ENCODE measurements at regions of chr17 and their contacts with region 1.

Region 1: GRCh38 chr17:81959362-81960129 is 1.4 kb downstream of the NOTUM start:
- DNase-seq: peak; percentile 76
- ATAC-seq: peak; percentile 86
- H3K4me3 Mint-ChIP-seq: peak overlapping the region; percentile 42
- H3K27ac Mint-ChIP-seq: no peak overlapping the region
- H3K4me1 Mint-ChIP-seq: peaks cover 4% of the 10 kb centered on the region
- H3K27me3 Mint-ChIP-seq: peaks cover 21% of the 10 kb centered on the region
- CTCF ChIP-seq: peak; percentile 91

Region 2: DNA sequence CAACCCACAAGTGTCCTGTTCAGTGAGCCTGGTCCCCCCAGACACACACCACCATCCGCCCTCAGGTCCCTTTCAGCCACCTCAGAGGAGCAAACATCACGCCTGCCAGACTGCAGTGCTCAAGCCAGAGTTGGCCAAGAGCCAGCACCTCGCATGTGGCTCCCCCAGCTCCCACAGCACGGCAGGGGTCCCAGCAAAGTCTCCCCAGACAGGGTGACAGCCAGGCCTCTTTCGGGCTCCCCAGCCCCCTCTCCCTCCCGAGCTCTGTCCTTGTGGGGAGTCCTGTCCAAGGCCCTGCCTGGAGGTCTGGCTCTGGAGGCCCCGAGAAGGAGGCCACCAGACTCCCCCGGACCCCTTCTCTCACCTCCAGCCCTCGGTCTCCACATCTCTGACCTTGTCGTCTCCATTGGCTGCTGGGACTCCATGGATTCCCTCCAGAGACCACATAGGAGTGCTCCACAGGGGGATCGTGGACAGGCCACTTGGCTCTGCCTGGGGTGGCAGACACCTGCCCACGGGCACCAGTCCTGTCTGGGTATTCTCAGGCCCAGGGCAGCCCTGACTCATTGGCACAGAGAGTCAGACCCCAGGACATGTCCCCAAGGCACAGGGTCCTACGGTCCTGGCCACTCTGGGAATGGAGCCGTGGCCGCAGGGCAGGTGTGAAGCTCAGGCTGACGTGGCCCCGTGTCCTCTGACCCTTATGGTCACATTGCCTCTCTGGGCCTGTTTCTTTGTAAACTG is 10.7 kb before region 1 on chr17:
- CTCF ChIA-PET with region 1: interaction called, 24 read pairs
- POLR2A ChIA-PET with region 1: interaction called, 5 read pairs
- intact Hi-C with region 1: no loop called
- DNase-seq: no peak
- ATAC-seq: no peak
- H3K4me3 Mint-ChIP-seq: no peak overlapping the region
- H3K27ac Mint-ChIP-seq: no peak overlapping the region
- H3K4me1 Mint-ChIP-seq: no peaks in the 10 kb centered on the region
- H3K27me3 Mint-ChIP-seq: no peaks in the 10 kb centered on the region
- CTCF ChIP-seq: no peak

Region 3: GRCh38 chr17:81977211-81978027 is 17.9 kb after region 1 on chr17 and contains the start of gene ASPSCR1:
- CTCF ChIA-PET with region 1: interaction called, 12 read pairs
- POLR2A ChIA-PET with region 1: interaction called, 4 read pairs
- intact Hi-C with region 1: no loop called
- DNase-seq: peak; percentile 92
- ATAC-seq: peak; percentile 90
- H3K4me3 Mint-ChIP-seq: peak within 1 kb of the TSS; percentile 96
- H3K27ac Mint-ChIP-seq: peak within 1 kb of the TSS; percentile 99
- H3K4me1 Mint-ChIP-seq: peaks cover 19% of the 10 kb centered on the region
- H3K27me3 Mint-ChIP-seq: no peaks in the 10 kb centered on the region
- CTCF ChIP-seq: no peak
- total RNA-seq, gene ASPSCR1: 18.7 to 24.5 TPM

Region 4: GRCh38 chr17:82017612-82018151 is 58.1 kb after region 1 on chr17:
- CTCF ChIA-PET with region 1: interaction called, 121 read pairs
- POLR2A ChIA-PET with region 1: interaction called, 9 read pairs
- intact Hi-C with region 1: loop called (anchors 5 kb)
- DNase-seq: no peak
- ATAC-seq: no peak
- H3K4me3 Mint-ChIP-seq: no peak overlapping the region
- H3K27ac Mint-ChIP-seq: no peak overlapping the region
- H3K4me1 Mint-ChIP-seq: peaks cover 8% of the 10 kb centered on the region
- H3K27me3 Mint-ChIP-seq: no peaks in the 10 kb centered on the region
- CTCF ChIP-seq: no peak

Region 5: DNA sequence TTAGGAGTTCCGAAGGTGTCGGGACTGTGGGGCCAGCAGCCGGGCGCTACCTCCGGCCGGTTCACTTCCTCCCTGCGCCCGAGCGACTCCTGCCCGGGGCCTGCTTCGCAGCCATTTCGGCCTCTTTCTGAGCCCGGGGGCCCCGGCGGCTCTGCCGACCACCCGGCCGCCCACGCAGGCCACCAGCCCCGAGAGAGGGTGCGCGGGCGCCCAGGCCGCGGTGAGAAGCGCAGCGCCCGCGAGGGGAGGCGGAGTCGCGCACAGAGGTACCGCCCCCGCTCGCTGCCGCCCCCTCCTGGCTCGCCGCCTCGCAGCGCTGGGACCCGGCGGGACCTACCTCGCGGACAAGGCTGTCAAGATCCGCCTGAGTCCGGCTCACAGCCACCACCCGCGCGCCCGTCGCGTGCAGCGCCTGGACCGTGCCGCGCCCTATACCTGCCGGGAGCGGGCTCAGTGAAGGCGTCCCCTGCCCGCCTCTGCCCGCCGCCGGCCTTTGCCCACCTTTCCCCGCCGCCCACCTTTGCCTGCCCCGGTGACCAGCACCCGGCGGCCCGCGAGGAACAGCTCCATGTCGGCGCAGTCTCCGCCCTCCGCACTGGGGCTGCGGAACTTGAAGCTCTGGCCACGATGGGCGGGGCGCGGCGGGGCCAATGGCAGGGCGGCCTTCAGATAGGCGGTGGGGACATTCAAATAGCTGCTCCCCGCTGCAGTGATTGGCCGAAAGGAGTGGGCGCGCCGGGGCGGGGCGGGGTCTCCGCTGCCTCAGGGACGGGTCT is 77.8 kb after region 1 on chr17 and contains the start of gene DCXR:
- CTCF ChIA-PET with region 1: interaction called, 18 read pairs
- POLR2A ChIA-PET with region 1: no interaction called
- intact Hi-C with region 1: no loop called
- DNase-seq: peak; percentile 98
- ATAC-seq: peak; percentile 95
- H3K4me3 Mint-ChIP-seq: peak within 1 kb of the TSS; percentile 68
- H3K27ac Mint-ChIP-seq: peak within 1 kb of the TSS; percentile 76
- H3K4me1 Mint-ChIP-seq: peaks cover 15% of the 10 kb centered on the region
- H3K27me3 Mint-ChIP-seq: no peaks in the 10 kb centered on the region
- CTCF ChIP-seq: peak; percentile 80
- total RNA-seq, gene DCXR: 99.2 to 101 TPM